CD8-positive, alpha-beta T cell (primary cell): ENCODE measurements at regions of chr9 and their contacts with region 1.

Region 1: DNA sequence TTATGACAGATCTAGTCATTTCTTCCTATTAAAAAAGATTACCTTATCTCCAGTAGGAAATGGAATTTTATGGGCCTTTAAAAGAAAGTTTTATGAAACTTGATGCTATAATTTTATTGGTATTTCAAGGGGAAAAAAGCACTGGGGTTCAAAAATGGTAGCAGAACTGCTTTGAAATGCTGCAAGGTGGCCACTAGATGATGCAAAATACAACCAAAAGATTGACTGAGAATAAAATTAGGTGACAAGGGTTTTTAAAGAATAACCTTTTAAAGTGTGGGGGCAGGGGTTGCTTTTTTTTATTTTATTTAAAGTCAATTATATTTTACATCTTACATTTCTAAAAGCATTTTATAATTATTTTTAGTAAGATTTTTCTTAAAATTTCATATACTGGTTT is 61.7 kb downstream of the KLF9 start:
- DNase-seq: peak in 2 of 9 experiments; percentile 34 to 53
- ATAC-seq: peak; percentile 36
- H3K4me3 ChIP-seq: no peak overlapping the region
- H3K4me3 Mint-ChIP-seq: no peak overlapping the region
- H3K27ac ChIP-seq: no peak overlapping the region
- H3K27ac Mint-ChIP-seq: no peak overlapping the region
- H3K4me1 ChIP-seq: no peaks in the 10 kb centered on the region
- H3K4me1 Mint-ChIP-seq: peaks cover 2% of the 10 kb centered on the region
- H3K27me3 ChIP-seq: no peaks in the 10 kb centered on the region
- H3K27me3 Mint-ChIP-seq: no peaks in the 10 kb centered on the region
- CTCF ChIP-seq: peak; percentile 75

Region 2: GRCh38 chr9:69971643-69972449 is 381.0 kb before region 1 on chr9:
- CTCF ChIA-PET with region 1: no interaction called
- POLR2A ChIA-PET with region 1: no interaction called
- intact Hi-C with region 1: loop called in 1 of 2 experiments (anchors 5 kb)
- DNase-seq: peak; percentile 1 to 52 (median 38)
- ATAC-seq: no peak
- H3K4me3 ChIP-seq: no peak overlapping the region
- H3K4me3 Mint-ChIP-seq: no peak overlapping the region
- H3K27ac ChIP-seq: no peak overlapping the region
- H3K27ac Mint-ChIP-seq: no peak overlapping the region
- H3K4me1 ChIP-seq: no peaks in the 10 kb centered on the region
- H3K4me1 Mint-ChIP-seq: no peaks in the 10 kb centered on the region
- H3K27me3 ChIP-seq: no peaks in the 10 kb centered on the region
- H3K27me3 Mint-ChIP-seq: peaks cover 20% of the 10 kb centered on the region
- CTCF ChIP-seq: peak; percentile 53

Region 3: GRCh38 chr9:70362952-70363351 is 10.2 kb after region 1 on chr9:
- CTCF ChIA-PET with region 1: no interaction called
- POLR2A ChIA-PET with region 1: no interaction called
- intact Hi-C with region 1: no loop called
- DNase-seq: no peak
- ATAC-seq: no peak
- H3K4me3 ChIP-seq: no peak overlapping the region
- H3K4me3 Mint-ChIP-seq: no peak overlapping the region
- H3K27ac ChIP-seq: no peak overlapping the region
- H3K27ac Mint-ChIP-seq: no peak overlapping the region
- H3K4me1 ChIP-seq: no peaks in the 10 kb centered on the region
- H3K4me1 Mint-ChIP-seq: no peaks in the 10 kb centered on the region
- H3K27me3 ChIP-seq: no peaks in the 10 kb centered on the region
- H3K27me3 Mint-ChIP-seq: no peaks in the 10 kb centered on the region
- CTCF ChIP-seq: no peak

Region 4: DNA sequence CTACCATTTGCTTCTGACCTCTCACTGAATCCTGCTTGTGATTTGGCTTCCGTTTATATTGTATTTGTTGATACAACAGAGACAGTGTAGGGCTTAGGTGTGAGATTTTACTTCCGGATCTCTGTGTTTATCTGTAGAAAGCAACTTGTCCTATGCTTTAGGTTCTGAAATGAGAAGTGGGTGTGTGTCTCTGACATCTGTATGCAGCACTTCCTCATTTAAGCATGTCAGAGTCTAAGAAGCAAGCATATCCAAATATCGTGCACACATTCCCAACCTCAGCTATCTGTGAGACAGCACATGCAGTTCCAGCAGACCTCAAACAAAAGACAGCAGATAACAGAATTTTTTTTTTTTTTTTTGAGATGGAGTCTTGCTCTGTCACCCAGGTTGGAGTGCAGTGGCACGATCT is 45.3 kb after region 1 on chr9:
- CTCF ChIA-PET with region 1: interaction called, 3 read pairs
- POLR2A ChIA-PET with region 1: no interaction called
- intact Hi-C with region 1: loop called (anchors 5 kb)
- DNase-seq: peak in 2 of 9 experiments; percentile 67 to 84
- ATAC-seq: peak; percentile 87
- H3K4me3 ChIP-seq: peak overlapping the region in 1 of 2 experiments; percentile 25
- H3K4me3 Mint-ChIP-seq: peak overlapping the region; percentile 52
- H3K27ac ChIP-seq: peak overlapping the region; percentile 10 to 77
- H3K27ac Mint-ChIP-seq: peak overlapping the region; percentile 82
- H3K4me1 ChIP-seq: peaks cover 62% of the 10 kb centered on the region
- H3K4me1 Mint-ChIP-seq: peaks cover 77% of the 10 kb centered on the region
- H3K27me3 ChIP-seq: no peaks in the 10 kb centered on the region
- H3K27me3 Mint-ChIP-seq: no peaks in the 10 kb centered on the region
- CTCF ChIP-seq: no peak

Region 5: GRCh38 chr9:70406434-70406862 is 53.6 kb after region 1 on chr9:
- CTCF ChIA-PET with region 1: interaction called, 4 read pairs
- POLR2A ChIA-PET with region 1: no interaction called
- intact Hi-C with region 1: loop called (anchors 2 to 5 kb)
- DNase-seq: peak in 4 of 9 experiments; percentile 22 to 68 (median 44)
- ATAC-seq: peak; percentile 36
- H3K4me3 ChIP-seq: peak overlapping the region in 1 of 2 experiments; percentile 1
- H3K4me3 Mint-ChIP-seq: peak overlapping the region; percentile 82
- H3K27ac ChIP-seq: peak overlapping the region in 1 of 2 experiments; percentile 55
- H3K27ac Mint-ChIP-seq: peak overlapping the region; percentile 79
- H3K4me1 ChIP-seq: peaks cover 67% of the 10 kb centered on the region
- H3K4me1 Mint-ChIP-seq: peaks cover 85% of the 10 kb centered on the region
- H3K27me3 ChIP-seq: no peaks in the 10 kb centered on the region
- H3K27me3 Mint-ChIP-seq: no peaks in the 10 kb centered on the region
- CTCF ChIP-seq: no peak